Heart right ventricle (tissue), 16 donors: ENCODE measurements at regions of chr11 and their contacts with region 1.

Region 1: GRCh38 chr11:7571640-7572000 is 57.8 kb downstream of the PPFIBP2 start:
- DNase-seq: peak; percentile 56 to 64
- ATAC-seq: peak; percentile 40 to 75 (median 72)
- H3K4me3 ChIP-seq: no peak overlapping the region
- H3K27ac ChIP-seq: peak overlapping the region in 1 of 10 donors; percentile 45
- H3K4me1 ChIP-seq: peaks cover 7 to 31% (median 22%) of the 10 kb centered on the region in 9 donors
- H3K27me3 ChIP-seq: peaks cover 0 to 22% (median 0%) of the 10 kb centered on the region in 7 donors
- CTCF ChIP-seq: peak; percentile 77 to 98 (median 93)

Region 2: GRCh38 chr11:7612661-7613393 is 41.2 kb after region 1 on chr11:
- intact Hi-C with region 1: loop called in 1 of 10 experiments (anchors 5 kb)
- DNase-seq: no peak
- ATAC-seq: peak in 3 of 8 donors; percentile 24 to 76 (median 45)
- H3K4me3 ChIP-seq: no peak overlapping the region
- H3K27ac ChIP-seq: no peak overlapping the region
- H3K4me1 ChIP-seq: peaks cover 0 to 21% (median 13%) of the 10 kb centered on the region in 9 donors
- H3K27me3 ChIP-seq: no peaks in the 10 kb centered on the region
- CTCF ChIP-seq: no peak

Region 3: DNA sequence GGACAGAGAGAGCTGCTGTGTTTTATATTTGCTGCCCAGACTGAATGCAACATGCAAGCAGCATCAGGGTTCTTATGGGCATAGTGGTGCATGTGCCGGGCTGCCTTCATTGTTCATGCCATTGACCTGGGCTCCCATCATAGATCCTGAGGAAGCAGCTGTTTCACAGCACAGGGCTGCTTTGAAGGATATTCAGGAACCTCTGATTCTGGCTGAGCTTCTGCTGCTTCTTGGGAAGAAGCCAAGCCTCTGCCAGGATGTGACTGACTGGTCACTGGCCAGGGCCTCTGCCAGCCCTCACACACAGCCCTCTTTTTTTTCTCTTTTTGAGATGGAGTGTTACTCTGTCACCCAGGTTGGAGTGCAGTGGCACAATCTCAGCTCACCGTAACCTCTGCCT is 58.4 kb after region 1 on chr11:
- intact Hi-C with region 1: no loop called
- DNase-seq: peak in 1 of 2 donors; percentile 45
- ATAC-seq: peak in 7 of 8 donors; percentile 49 to 83 (median 74)
- H3K4me3 ChIP-seq: no peak overlapping the region
- H3K27ac ChIP-seq: no peak overlapping the region
- H3K4me1 ChIP-seq: peaks cover 0 to 11% (median 0%) of the 10 kb centered on the region in 9 donors
- H3K27me3 ChIP-seq: no peaks in the 10 kb centered on the region
- CTCF ChIP-seq: no peak

Region 4: GRCh38 chr11:7651140-7651551 is 79.5 kb after region 1 on chr11:
- intact Hi-C with region 1: loop called in 7 of 10 experiments (anchors 2 to 5 kb)
- DNase-seq: no peak
- ATAC-seq: no peak
- H3K4me3 ChIP-seq: no peak overlapping the region
- H3K27ac ChIP-seq: no peak overlapping the region
- H3K4me1 ChIP-seq: peaks cover 0 to 8% (median 2%) of the 10 kb centered on the region in 9 donors
- H3K27me3 ChIP-seq: no peaks in the 10 kb centered on the region
- CTCF ChIP-seq: no peak

Region 5: DNA sequence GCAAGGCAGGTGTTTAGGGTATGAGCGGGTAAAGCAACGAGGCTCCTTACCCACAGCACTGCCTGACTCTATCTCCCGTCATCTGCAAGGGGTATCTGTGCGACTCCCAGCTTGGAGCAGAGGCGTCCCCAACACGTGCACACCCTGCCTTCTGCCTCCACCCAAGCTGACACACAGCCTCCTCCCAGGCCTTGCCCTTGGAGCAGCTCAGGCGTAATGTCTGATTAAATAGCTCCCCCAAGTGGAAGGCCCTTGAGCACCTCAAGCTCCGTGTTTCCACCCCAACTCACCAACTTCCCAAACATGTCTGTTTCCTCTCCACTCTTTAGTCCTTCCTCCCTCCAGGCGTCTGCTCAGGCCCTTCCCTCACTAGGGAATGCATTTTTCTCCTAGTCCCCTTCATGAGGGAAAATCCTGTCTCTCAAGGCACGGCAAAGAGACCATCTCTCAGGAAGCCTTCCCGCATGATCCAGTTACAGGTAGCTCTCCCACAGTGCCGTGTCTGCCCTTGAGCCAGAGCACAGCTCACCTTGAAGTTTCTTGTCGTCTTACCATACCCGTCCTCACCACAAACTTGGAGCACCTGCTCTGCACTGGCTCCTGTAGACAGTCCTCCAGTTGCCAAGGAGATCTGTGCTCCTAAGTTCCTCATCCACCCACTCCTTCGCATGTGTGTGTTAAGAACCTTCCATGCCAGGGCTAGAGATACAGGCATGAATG is 85.8 kb after region 1 on chr11:
- intact Hi-C with region 1: loop called in 8 of 10 experiments (anchors 1 to 5 kb)
- DNase-seq: peak; percentile 48 to 53
- ATAC-seq: peak; percentile 87 to 95 (median 92)
- H3K4me3 ChIP-seq: no peak overlapping the region
- H3K27ac ChIP-seq: peak overlapping the region in 2 of 10 donors; percentile 71
- H3K4me1 ChIP-seq: peaks cover 0 to 19% (median 12%) of the 10 kb centered on the region in 9 donors
- H3K27me3 ChIP-seq: no peaks in the 10 kb centered on the region
- CTCF ChIP-seq: peak in 8 of 9 donors; percentile 27 to 70 (median 57)

Region 6: GRCh38 chr11:7665473-7666291 is 94.1 kb after region 1 on chr11:
- intact Hi-C with region 1: loop called in 6 of 10 experiments (anchors 2 to 5 kb)
- DNase-seq: peak; percentile 71 to 81
- ATAC-seq: peak; percentile 85 to 95 (median 92)
- H3K4me3 ChIP-seq: no peak overlapping the region
- H3K27ac ChIP-seq: no peak overlapping the region
- H3K4me1 ChIP-seq: peaks cover 0 to 3% (median 0%) of the 10 kb centered on the region in 9 donors
- H3K27me3 ChIP-seq: peaks cover 0 to 3% (median 0%) of the 10 kb centered on the region in 7 donors
- CTCF ChIP-seq: peak; percentile 64 to 91 (median 81)